Ascending aorta (tissue), 2 donors: ENCODE measurements at regions of chr10 and their contacts with region 1.

Region 1: DNA sequence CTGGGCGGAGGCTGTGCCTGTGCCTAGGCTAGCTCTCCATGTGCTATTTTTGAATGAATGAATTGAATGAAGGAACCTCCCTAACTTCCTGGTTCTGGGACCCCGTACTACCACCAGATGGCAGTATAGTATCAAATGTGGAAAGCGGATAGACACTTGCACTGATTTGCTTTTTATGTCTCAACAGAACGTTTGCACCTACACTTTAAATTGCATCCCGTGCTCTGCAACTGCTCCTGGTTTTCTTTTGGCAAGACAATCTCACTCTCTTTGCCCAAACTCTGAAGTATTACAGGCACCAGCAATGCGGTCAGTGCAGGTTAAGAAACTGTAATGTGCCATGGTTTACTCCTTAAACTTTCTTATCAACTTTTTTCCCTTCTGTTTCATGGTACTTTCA is 6.5 kb downstream of the FZD8 start:
- DNase-seq: peak in 1 of 2 donors; percentile 72
- H3K4me3 ChIP-seq: no peak overlapping the region
- H3K27ac ChIP-seq: no peak overlapping the region
- H3K4me1 ChIP-seq: peaks cover 0 to 4% of the 10 kb centered on the region in 2 donors
- H3K27me3 ChIP-seq: no peaks in the 10 kb centered on the region
- CTCF ChIP-seq: peak; percentile 71 to 92 (median 89)

Region 2: DNA sequence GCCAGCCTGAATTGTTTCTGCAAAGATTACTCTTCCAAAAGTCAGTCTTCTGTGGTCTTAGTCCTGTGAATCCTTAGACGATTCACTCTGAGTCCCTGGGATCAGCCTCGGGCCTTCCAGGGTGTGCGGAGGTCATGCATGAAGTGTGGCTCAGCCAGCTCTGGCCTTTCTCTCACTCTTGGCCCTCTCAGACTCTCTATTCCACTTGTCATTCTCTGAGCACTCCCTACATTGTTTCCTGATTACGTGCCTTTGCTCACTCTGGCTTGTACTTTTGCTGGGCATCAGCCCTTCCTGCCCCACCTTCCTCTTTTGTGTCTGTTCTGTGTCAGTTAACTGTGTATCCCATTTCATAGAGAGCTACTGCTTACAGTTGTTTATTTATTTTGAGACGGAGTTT is 263.2 kb before region 1 on chr10:
- intact Hi-C with region 1: no loop called
- DNase-seq: no peak
- H3K4me3 ChIP-seq: no peak overlapping the region
- H3K27ac ChIP-seq: peak overlapping the region in 1 of 2 donors; percentile 51
- H3K4me1 ChIP-seq: peaks cover 7 to 22% of the 10 kb centered on the region in 2 donors
- H3K27me3 ChIP-seq: no peaks in the 10 kb centered on the region
- CTCF ChIP-seq: no peak

Region 3: DNA sequence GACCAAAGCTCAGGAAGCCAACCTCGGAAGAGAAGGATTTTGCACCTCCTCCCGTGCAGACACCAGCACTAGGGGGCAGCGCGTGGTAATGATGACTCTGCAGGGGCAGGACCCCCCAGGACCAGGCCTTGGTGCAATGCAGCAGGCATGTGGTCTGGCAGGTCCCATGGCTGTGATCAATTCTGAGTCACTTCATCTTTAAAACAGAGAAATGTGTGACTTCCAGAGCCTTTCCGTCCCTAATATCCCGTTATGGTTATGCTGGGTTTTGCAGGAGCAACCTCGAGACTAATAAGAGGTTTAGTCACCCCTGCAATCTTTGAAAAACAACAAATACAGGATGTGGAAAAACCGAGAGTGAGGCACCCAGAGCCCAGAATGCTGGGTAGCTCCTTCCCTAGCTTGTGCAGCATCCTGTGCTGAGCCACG is 60.6 kb before region 1 on chr10:
- intact Hi-C with region 1: no loop called
- DNase-seq: no peak
- H3K4me3 ChIP-seq: no peak overlapping the region
- H3K27ac ChIP-seq: no peak overlapping the region
- H3K4me1 ChIP-seq: no peaks in the 10 kb centered on the region
- H3K27me3 ChIP-seq: no peaks in the 10 kb centered on the region
- CTCF ChIP-seq: no peak

Region 4: GRCh38 chr10:36254199-36254598 is 618.6 kb after region 1 on chr10:
- intact Hi-C with region 1: loop called (anchors 10 kb)
- DNase-seq: peak in 1 of 2 donors; percentile 72
- H3K4me3 ChIP-seq: no peak overlapping the region
- H3K27ac ChIP-seq: no peak overlapping the region
- H3K4me1 ChIP-seq: peaks cover 3 to 7% of the 10 kb centered on the region in 2 donors
- H3K27me3 ChIP-seq: no peaks in the 10 kb centered on the region
- CTCF ChIP-seq: no peak

Region 5: DNA sequence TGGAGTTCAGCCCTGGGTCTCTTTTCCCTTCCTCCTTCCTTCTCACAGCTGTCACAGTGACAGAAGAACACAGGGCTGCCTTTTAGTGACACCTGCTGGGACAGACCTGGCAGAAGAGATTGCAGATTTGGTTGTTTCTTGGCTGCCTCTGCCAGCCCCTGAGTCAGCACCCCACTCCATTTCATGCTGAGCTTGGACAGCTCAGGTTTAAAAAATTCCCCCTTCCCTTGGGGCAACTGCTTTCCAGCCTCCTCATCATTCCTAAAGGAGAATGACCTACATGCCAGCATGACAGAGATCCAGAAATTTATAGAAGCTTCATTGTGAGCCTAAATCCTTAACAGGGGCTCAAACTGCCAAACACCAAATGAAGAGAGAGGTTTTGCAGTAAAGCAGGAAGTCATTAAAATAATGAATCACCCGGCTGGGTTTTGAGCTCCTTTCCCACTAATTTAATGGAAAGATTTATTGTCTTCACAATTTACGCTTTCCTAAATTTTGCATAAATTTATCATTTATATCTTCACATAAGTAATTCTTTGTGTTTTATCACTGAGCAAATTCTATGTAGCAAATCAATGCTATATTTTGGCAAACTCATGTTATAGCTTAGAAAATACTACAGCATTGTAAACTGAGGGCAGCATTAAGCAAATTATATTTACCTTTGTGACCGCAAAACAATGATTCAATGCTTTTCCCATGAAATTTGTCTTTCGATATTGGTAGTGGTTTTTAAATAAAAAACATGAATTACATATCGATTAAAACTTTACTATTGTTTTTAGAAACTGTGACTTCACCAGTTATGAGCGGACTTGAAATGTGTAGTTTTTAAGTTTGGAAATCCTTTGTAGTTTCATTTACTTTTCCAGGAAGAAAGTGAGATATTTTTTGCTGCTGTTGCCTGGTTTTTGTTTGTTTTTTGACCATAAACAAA is 1090.3 kb after region 1 on chr10:
- intact Hi-C with region 1: loop called (anchors 2 kb)
- DNase-seq: no peak
- H3K4me3 ChIP-seq: no peak overlapping the region
- H3K27ac ChIP-seq: no peak overlapping the region
- H3K4me1 ChIP-seq: no peaks in the 10 kb centered on the region
- H3K27me3 ChIP-seq: no peaks in the 10 kb centered on the region
- CTCF ChIP-seq: peak in 1 of 3 experiments; percentile 26

Region 6: GRCh38 chr10:36779234-36779846 is 1143.8 kb after region 1 on chr10:
- intact Hi-C with region 1: loop called (anchors 1 kb)
- DNase-seq: no peak
- H3K4me3 ChIP-seq: no peak overlapping the region
- H3K27ac ChIP-seq: no peak overlapping the region
- H3K4me1 ChIP-seq: no peaks in the 10 kb centered on the region
- H3K27me3 ChIP-seq: no peaks in the 10 kb centered on the region
- CTCF ChIP-seq: peak; percentile 63 to 87 (median 70)

Region 7: DNA sequence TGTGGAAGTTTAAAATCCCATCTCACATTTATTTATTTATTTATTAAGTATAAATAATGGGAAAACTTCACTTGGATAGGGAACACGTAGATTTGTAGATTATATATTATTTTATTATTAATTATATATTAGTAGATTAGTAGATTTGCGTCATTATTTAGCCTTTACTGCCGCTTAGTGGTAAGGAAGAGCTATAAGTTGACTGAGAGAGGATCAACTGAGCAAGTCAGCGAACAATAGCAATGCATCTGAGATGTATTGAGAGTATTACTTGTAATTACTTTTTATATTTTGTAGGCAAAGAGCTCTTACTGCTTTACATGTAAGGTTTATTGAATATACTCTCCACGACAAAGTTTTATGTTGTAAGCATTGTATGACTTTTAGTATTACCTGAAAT is 1245.3 kb after region 1 on chr10:
- intact Hi-C with region 1: loop called (anchors 5 kb)
- DNase-seq: no peak
- H3K4me3 ChIP-seq: no peak overlapping the region
- H3K27ac ChIP-seq: no peak overlapping the region
- H3K4me1 ChIP-seq: no peaks in the 10 kb centered on the region
- H3K27me3 ChIP-seq: no peaks in the 10 kb centered on the region
- CTCF ChIP-seq: peak in 1 of 3 experiments; percentile 50